AG04449 (cell line): ENCODE measurements at regions of chr22 and their contacts with region 1.

Region 1: DNA sequence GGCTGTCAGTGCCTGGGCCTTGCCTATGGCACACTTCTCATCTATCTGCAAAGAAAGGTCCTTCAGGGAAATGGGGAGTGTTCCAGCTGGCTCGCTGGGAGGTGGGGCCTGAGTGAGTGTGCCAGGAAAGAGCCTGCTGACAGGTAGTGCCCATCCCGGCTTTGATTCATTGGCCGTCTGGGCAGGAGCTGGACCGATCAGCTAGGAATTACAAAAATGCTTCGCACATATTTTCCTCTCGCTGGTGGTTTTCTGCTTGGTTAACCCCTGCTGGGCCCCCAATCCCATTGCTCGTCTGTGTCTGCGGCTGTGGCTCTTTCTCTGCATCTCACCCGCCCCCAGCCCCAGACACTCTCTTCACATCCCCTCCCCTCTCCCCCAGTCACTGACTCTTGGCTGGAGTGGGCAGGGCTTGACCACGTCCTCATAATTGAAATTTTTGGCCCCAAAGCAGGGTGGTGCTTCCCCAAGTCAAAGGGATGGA is 10.8 kb downstream of the LIF start:
- DNase-seq: peak; percentile 90
- H3K4me3 ChIP-seq: no peak overlapping the region
- CTCF ChIP-seq: no peak

Region 2: DNA sequence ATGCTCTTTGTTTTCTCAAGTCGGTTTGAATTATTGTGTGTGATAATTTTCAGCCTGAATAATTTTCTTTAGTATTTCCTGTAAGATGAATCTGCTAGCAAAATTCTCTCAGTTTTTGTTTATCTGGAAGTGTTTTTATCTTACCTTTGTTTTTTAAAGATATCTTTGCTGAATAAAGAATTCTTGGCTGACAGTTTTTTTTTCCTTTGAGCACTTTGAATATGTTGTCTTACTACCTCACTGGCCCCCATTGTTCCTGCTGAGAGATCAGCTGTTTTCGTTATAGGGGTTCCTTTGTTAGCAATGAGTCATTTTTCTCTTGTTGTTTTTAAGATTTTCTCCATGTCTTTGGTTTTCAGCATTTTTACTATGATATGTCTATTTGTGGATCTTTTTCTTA is 92.5 kb before region 1 on chr22:
- CTCF ChIA-PET with region 1: no interaction called
- POLR2A ChIA-PET with region 1: no interaction called
- DNase-seq: no peak
- H3K4me3 ChIP-seq: no peak overlapping the region
- CTCF ChIP-seq: no peak

Region 3: GRCh38 chr22:30196141-30196879 is 39.4 kb before region 1 on chr22:
- CTCF ChIA-PET with region 1: no interaction called
- POLR2A ChIA-PET with region 1: interaction called, 13 read pairs
- DNase-seq: peak; percentile 100
- H3K4me3 ChIP-seq: peak overlapping the region; percentile 29
- CTCF ChIP-seq: no peak

Region 4: GRCh38 chr22:30245985-30246901 is 10.5 kb after region 1 on chr22 and contains the start of gene LIF:
- CTCF ChIA-PET with region 1: interaction called, 5 read pairs
- POLR2A ChIA-PET with region 1: interaction called, 11 read pairs
- DNase-seq: no peak
- H3K4me3 ChIP-seq: peak within 1 kb of the TSS; percentile 75
- CTCF ChIP-seq: peak; percentile 30

Region 5: DNA sequence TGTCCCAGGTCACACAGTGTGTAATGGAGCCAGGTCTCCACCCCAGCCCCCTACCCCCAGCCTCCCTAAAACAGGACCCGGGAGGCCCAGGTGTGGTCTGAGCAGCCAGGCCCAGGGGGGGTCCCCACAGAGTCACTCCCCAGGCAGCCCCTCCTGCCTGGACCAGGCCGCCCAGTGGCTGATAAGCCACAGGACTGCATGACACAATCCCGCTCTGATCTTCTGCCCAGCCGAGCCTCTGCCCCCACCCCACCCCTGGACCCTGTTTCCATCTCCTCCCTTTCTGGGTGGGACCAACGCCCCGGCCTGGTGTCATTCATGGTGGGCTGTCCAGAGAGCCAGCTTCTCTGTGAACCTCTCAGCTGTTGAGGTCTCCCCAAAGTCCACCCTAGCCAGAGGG is 18.6 kb after region 1 on chr22:
- CTCF ChIA-PET with region 1: interaction called, 11 read pairs
- POLR2A ChIA-PET with region 1: interaction called, 11 read pairs
- DNase-seq: no peak
- H3K4me3 ChIP-seq: no peak overlapping the region
- CTCF ChIP-seq: no peak